Right ventricle myocardium inferior (tissue), 1 donor: ENCODE measurements at regions of chr19 and their contacts with region 1.

Region 1: DNA sequence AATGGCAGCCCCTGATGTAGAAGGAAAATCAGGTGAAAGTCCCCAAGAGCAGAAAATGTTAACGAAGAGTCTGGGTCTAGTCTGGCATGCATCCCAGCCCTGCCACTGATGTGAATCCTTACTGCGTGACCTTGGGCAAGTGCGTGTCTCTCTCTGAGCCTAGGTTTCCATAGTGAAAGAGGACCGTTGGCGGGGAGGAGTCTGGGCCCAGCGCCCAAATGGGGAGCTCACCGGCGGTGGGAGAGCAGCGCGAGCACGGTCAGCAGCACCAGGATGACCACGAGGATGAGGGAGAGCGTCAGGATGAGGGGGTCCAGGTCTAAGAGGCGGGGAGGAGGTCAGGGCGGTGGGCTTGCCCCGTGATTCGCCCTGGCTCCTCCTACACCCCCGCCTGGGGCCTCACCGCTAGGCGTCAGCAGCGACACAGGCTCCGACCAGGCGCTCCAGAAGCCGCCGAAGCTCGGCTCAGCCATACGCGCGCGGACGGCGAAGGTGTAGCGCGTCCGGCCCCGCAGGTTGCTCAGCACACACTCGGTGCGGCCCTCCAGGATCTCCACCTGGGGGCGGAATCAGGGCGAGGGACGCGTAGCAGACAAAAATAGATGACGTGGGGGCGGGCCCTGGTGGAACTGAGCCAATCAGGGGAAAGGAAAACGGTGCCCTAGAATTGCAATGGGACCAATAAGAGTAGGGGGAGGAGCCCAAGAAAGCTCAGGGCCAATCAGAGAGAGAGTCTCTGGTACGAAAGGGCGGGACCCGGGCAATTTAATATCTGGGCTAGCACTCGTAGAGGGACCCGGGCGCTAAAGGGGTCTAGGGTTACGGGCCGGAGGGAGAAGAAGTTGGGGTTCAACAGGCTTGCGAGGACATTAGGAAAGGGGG is 3.2 kb downstream of the EPOR start:
- DNase-seq: peak; percentile 95
- ATAC-seq: peak; percentile 88

Region 2: DNA sequence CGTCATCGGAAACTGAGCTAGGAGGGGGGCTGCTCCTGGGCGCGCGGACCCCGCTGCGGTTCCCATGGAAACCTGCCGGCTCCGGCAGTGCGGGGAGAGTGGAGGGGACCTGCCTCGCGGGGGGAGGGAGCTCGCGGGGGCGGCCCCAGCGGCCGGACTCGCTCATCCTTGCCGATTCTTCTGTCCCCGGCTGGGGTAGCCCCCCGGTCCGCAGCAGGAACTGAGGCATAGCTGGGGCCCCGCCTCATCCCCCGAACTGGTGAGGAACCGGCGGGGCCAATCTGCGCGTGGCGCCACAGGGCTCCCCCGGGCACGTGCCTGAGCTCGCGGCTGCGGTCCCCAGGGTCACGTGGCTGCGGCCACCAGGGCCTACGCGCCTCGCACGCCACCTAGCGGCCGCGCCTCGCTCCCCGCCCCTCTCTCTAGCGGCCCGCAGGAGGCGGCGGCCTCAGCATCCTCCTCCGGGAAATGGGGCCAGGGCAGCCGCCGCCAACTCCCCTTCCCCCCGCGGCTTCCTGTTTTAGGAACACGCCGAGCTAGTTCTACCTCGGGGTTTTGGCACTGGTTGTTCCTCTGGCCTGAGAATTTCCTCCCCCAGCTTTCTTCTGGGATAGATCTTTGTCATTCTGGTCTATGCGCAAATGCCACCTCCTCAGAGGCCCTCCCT is 101.6 kb after region 1 on chr19:
- intact Hi-C with region 1: loop called (anchors 5 kb)
- DNase-seq: peak; percentile 94
- ATAC-seq: peak; percentile 88